Heart right ventricle (tissue), 16 donors: ENCODE measurements at regions of chr11 and their contacts with region 1.

Region 1: GRCh38 chr11:26849036-26849435 is 127.2 kb upstream of the SLC5A12 start:
- DNase-seq: peak; percentile 9 to 31
- ATAC-seq: peak in 7 of 8 donors; percentile 55 to 85 (median 64)
- H3K4me3 ChIP-seq: no peak overlapping the region
- H3K27ac ChIP-seq: peak overlapping the region in 5 of 10 donors; percentile 58 to 71 (median 66)
- H3K4me1 ChIP-seq: peaks cover 0 to 22% (median 0%) of the 10 kb centered on the region in 9 donors
- H3K27me3 ChIP-seq: no peaks in the 10 kb centered on the region
- CTCF ChIP-seq: no peak

Region 2: DNA sequence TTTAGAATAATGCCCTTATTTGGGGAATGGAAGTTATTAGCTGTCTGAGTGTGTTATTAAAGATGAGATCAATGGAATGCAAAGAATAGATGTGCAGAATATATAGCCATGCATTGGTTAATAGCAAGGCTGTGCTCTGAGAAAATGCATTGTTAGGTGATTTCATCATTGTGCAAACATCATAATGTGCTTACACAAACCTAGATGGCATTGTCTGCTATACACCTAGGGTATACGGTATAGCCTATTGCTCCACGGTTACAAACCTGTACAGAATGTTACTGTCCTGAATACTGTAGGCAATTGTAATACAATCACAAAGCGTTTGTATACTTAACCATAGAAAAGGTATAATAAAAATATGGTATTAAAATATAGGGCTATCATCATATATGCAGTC is 152.7 kb before region 1 on chr11:
- intact Hi-C with region 1: no loop called
- DNase-seq: no peak
- ATAC-seq: no peak
- H3K4me3 ChIP-seq: no peak overlapping the region
- H3K27ac ChIP-seq: no peak overlapping the region
- H3K4me1 ChIP-seq: no peaks in the 10 kb centered on the region
- H3K27me3 ChIP-seq: no peaks in the 10 kb centered on the region
- CTCF ChIP-seq: no peak

Region 3: DNA sequence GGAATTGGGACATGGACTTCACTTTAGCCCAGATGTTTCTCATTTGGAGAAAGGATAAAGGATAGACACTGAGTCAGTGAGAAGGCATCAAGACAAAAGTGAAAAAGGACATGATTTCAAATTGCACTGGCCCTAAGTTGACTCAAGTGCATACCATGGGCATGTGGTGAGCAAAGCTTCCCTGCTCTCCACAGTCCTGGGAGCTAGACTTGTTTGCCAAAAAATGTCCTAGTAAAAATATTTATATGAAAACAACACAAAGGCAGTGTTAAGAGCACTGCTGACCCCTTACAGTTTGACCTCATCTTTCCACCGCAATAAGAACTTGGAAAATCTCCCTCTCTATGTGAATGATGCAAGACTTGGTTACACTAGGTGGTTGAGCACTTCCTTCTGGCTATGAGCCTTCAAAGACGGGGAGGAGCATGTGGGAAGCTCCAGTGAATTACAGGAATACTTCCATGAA is 98.4 kb after region 1 on chr11:
- intact Hi-C with region 1: loop called in 1 of 10 experiments (anchors 5 kb)
- DNase-seq: peak in 1 of 2 donors; percentile 48
- ATAC-seq: peak; percentile 86 to 93 (median 90)
- H3K4me3 ChIP-seq: no peak overlapping the region
- H3K27ac ChIP-seq: peak overlapping the region in 7 of 10 donors; percentile 11 to 72 (median 29)
- H3K4me1 ChIP-seq: peaks cover 0 to 9% (median 0%) of the 10 kb centered on the region in 9 donors
- H3K27me3 ChIP-seq: no peaks in the 10 kb centered on the region
- CTCF ChIP-seq: no peak

Region 4: GRCh38 chr11:26993965-26994457 is 145.0 kb after region 1 on chr11 and contains the start of gene FIBIN:
- intact Hi-C with region 1: loop called in 1 of 10 experiments (anchors 10 kb)
- DNase-seq: peak; percentile 24 to 27
- ATAC-seq: peak; percentile 31 to 69 (median 56)
- H3K4me3 ChIP-seq: peak within 1 kb of the TSS; percentile 19 to 64 (median 52)
- H3K27ac ChIP-seq: peak within 1 kb of the TSS; percentile 49 to 88 (median 80)
- H3K4me1 ChIP-seq: peaks cover 0 to 13% (median 0%) of the 10 kb centered on the region in 9 donors
- H3K27me3 ChIP-seq: peaks cover 0 to 20% (median 6%) of the 10 kb centered on the region in 7 donors
- CTCF ChIP-seq: no peak
- total RNA-seq, gene FIBIN: 3.5 to 13.8 (median 6.8) TPM